ENCODE measurements at regions of chr16 and their contacts with region 1.

Region 1: DNA sequence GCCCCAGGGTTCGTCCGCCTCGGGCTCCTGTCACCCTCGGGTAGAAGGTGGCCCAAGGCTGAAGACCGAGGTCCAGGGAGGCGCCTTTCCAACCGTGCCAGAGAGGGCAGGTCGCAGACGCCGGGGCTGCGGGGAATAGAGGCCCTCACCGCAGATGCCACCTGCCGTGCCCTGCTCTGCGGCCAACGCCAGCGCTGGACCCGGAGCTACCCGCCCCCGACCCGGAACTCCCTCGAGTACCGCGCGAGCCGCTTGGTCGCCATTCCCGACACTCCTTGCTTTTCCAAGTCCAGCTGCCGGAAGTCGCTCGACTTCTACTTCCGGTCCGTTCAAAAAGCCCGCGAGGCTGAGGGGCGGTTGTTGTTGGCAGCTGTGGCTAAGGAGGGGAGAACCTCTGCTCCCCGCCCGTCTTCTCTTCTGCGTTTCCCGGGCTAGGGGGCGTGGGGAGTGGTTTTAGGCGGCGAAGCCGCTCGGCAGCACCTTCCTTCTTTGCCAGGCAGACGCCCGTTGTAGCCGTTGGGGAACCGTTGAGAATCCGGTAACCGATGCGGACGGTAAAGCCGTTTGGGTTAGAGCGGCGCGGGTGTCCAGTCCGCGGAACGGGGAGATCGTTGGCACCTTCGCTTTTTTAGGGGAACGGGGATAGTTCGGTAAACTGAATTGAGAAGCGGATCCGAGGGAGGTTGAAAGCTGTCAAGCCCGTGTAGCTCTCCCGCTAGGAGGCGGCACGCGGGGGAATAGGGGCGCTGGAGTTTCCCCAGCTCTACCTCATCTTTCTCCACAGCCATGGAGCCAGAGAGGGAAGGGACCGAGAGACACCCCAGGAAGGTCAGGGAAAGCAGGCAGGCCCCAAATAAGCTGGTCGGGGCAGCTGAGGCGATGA is at the starts of genes ERI2 and REXO5:
- DNase-seq: peak; percentile 93
- CTCF ChIP-seq: peak; percentile 58

Region 2: GRCh38 chr16:20818929-20819585 is 12.6 kb after region 1 on chr16:
- CTCF ChIA-PET with region 1: interaction called, 18 read pairs
- POLR2A ChIA-PET with region 1: no interaction called
- DNase-seq: no peak
- CTCF ChIP-seq: no peak

Region 3: DNA sequence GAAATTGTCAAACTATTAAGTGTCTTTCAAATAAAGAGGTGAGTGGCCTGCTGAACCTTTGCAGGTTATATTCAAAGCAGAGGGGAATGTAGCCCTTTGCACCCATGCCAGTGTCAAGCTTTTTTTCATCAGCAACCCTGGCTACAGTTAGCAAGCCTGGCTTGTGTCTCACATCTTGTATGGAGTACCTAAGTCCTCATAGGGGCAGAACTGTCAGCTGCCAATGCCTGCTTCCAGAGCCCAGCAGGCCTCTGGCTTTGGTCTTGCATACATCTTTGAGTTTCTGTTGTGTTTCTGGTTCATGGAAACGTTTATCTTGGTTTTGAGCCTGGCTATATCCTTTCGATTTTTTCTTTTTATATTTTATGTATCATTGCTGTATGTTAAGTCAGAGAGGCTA is 26.7 kb after region 1 on chr16:
- CTCF ChIA-PET with region 1: interaction called, 12 read pairs
- POLR2A ChIA-PET with region 1: interaction called, 8 read pairs
- DNase-seq: no peak
- CTCF ChIP-seq: no peak